Ovary (tissue), 10 donors: ENCODE measurements at regions of chr7 and their contacts with region 1.

Region 1: DNA sequence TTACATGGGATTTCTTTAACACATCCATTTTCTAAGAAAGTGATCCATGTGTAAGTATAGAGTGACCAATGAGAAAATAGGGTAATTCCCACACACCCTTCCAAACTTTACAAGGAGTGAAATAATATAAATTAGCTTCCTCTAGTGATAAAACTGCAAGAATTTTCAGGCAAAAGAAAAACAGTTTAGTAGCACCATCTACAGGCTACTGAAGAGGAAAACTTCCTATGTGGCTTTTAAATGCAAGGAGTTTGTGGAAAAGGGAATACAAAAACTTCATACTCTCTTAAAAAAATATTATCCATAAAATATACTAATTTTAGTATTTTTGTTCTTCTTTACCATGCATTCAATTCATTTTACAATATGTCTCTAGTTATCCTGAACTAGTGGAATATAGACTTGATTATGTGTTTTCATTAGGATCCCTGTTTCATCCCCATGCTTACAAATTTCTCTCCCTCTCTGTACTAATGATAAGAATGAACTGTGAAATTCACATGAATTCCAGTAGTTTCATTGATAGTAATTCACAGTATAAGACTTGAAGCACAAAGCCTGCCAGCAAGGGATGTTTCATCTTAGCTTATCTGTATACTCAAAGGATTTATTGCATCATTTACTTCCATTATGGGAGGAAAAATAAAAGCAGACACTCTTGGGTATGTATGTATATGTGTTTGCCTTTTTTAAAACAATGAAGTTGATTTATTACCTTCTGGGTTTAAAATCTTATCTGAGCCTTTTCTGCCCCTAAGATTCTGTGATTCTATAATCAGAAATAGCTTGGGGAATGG is 442.9 kb downstream of the AUTS2 start:
- DNase-seq: no peak
- H3K4me3 ChIP-seq: no peak overlapping the region
- H3K27ac ChIP-seq: no peak overlapping the region
- H3K4me1 ChIP-seq: no peaks in the 10 kb centered on the region
- H3K27me3 ChIP-seq: no peaks in the 10 kb centered on the region
- CTCF ChIP-seq: peak in 1 of 3 donors; percentile 37
- EP300 ChIP-seq: no peak
- POLR2A ChIP-seq: no peak

Region 2: GRCh38 chr7:69787736-69788431 is 253.3 kb before region 1 on chr7:
- intact Hi-C with region 1: no loop called
- DNase-seq: no peak
- H3K4me3 ChIP-seq: no peak overlapping the region
- H3K27ac ChIP-seq: no peak overlapping the region
- H3K4me1 ChIP-seq: peaks cover 22% of the 10 kb centered on the region
- H3K27me3 ChIP-seq: no peaks in the 10 kb centered on the region
- CTCF ChIP-seq: no peak
- EP300 ChIP-seq: no peak
- POLR2A ChIP-seq: no peak

Region 3: GRCh38 chr7:70693686-70694360 is 652.7 kb after region 1 on chr7:
- intact Hi-C with region 1: loop called in 2 of 4 experiments (anchors 10 kb)
- DNase-seq: peak; percentile 67 to 78 (median 76)
- H3K4me3 ChIP-seq: peak overlapping the region; percentile 58
- H3K27ac ChIP-seq: peak overlapping the region; percentile 73 to 88
- H3K4me1 ChIP-seq: peaks cover 3% of the 10 kb centered on the region
- H3K27me3 ChIP-seq: no peaks in the 10 kb centered on the region
- CTCF ChIP-seq: peak in 1 of 3 donors; percentile 39
- EP300 ChIP-seq: no peak
- POLR2A ChIP-seq: no peak